ENCODE measurements at regions of chrX and their contacts with region 1.

Region 1: DNA sequence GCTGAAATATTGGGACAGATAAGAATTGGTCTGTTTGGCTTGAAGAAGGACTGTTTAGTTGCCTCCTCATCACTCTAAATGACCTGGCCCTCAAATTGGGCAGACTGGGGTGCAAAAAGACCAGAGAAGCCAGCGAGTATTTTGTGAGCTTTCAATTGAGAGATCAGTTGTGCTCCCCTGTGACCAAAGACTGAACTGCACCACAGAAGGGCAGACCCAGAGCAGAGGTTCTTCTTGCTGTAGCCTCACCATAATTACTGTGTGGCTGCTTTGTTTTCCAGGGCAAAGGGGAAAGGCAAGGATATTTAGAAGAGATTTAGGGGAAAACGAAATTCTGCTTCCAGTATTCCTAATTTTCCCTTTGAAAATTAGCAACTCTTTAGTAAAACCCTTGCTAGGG is 104.0 kb upstream of the MBNL3 start:
- ATAC-seq: peak in 3 of 8 experiments; percentile 38 to 66 (median 47)
- H3K4me3 ChIP-seq: no peak overlapping the region
- H3K27ac ChIP-seq: no peak overlapping the region
- H3K4me1 ChIP-seq: no peaks in the 10 kb centered on the region

Region 2: DNA sequence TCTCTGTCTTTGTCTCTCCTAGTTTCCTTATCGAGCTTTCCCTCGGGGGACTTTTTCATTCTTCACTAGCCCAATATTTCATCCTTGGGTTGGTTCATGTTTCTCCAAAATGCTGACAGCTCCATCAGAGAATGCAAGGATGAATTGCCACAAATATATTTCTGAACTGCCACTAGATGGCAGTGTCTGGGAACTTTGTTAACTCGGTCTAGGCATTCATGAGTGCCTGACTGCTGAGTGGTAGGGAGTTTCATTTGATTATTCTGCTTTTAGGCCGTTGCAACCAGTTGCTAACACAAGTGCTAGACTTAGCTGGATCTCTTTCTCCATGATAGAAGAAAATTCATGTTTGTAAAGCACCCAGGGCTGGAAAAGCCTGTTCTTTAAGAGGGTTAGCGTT is 300.1 kb before region 1 on chrX:
- in situ Hi-C with region 1: loop called in 1 of 9 experiments (anchors 25 kb)
- ATAC-seq: peak; percentile 49 to 85 (median 58)
- H3K4me3 ChIP-seq: no peak overlapping the region
- H3K27ac ChIP-seq: no peak overlapping the region
- H3K4me1 ChIP-seq: no peaks in the 10 kb centered on the region

Region 3: GRCh38 chrX:132497432-132497831 is 95.4 kb before region 1 on chrX:
- in situ Hi-C with region 1: no loop called
- ATAC-seq: no peak
- H3K4me3 ChIP-seq: no peak overlapping the region
- H3K27ac ChIP-seq: no peak overlapping the region
- H3K4me1 ChIP-seq: no peaks in the 10 kb centered on the region

Region 4: DNA sequence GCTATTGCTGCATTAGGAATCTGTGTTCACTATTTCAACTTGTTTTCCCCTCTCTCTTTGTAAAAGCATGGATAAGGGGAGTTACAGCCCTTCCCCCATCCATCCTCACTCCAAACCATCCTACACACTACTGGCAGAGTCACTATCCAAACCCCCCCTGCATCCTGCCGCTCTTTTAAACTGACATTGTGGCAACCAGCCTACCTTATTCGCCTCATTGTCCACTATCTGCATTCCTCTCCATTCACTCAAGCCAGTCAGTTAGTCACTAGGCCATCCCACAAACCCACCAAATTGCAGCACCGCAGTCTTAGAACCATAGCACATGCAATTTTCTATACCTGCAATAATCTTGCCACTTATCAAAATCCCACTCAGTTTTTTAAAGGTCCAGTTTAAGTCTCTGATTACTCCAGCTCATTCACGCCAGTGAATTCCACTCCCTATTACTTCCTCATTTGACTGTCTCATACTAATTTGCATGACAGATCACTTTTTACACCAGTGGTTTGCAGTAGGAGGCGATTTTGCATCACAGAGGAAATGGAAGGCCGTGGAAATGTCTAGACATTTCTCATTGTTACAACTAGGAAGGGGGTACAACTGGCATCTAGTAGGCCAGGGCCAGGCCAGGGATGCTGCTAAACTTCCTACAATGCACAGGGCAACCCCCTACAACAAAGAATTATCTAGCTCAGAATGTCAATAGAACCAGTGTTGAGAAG is 183.8 kb after region 1 on chrX:
- in situ Hi-C with region 1: no loop called
- ATAC-seq: no peak
- H3K4me3 ChIP-seq: no peak overlapping the region
- H3K27ac ChIP-seq: no peak overlapping the region
- H3K4me1 ChIP-seq: no peaks in the 10 kb centered on the region

Measured in motor neuron (in vitro differentiated cells).